ENCODE measurements at regions of chr3 and their contacts with region 1.

Region 1: GRCh38 chr3:47522082-47522987 is 8.8 kb upstream of the ELP6 start:
- DNase-seq: peak; percentile 85 to 86
- H3K4me3 ChIP-seq: no peak overlapping the region
- H3K4me3 Mint-ChIP-seq: no peak overlapping the region
- H3K27ac Mint-ChIP-seq: peak overlapping the region; percentile 40
- H3K4me1 ChIP-seq: peaks cover 11% of the 10 kb centered on the region
- H3K4me1 Mint-ChIP-seq: peaks cover 7% of the 10 kb centered on the region
- H3K27me3 ChIP-seq: no peaks in the 10 kb centered on the region
- H3K27me3 Mint-ChIP-seq: no peaks in the 10 kb centered on the region
- CTCF ChIP-seq: peak; percentile 84 to 89

Region 2: GRCh38 chr3:47261301-47261700 is 261.0 kb before region 1 on chr3:
- CTCF ChIA-PET with region 1: no interaction called
- POLR2A ChIA-PET with region 1: no interaction called
- intact Hi-C with region 1: no loop called
- DNase-seq: peak in 1 of 2 experiments; percentile 49
- H3K4me3 ChIP-seq: no peak overlapping the region
- H3K4me3 Mint-ChIP-seq: no peak overlapping the region
- H3K27ac Mint-ChIP-seq: no peak overlapping the region
- H3K4me1 ChIP-seq: peaks cover 17% of the 10 kb centered on the region
- H3K4me1 Mint-ChIP-seq: peaks cover 10% of the 10 kb centered on the region
- H3K27me3 ChIP-seq: no peaks in the 10 kb centered on the region
- H3K27me3 Mint-ChIP-seq: no peaks in the 10 kb centered on the region
- CTCF ChIP-seq: no peak

Region 3: GRCh38 chr3:47420511-47421484 is 101.5 kb before region 1 on chr3:
- CTCF ChIA-PET with region 1: interaction called, 10 read pairs
- POLR2A ChIA-PET with region 1: no interaction called
- intact Hi-C with region 1: no loop called
- DNase-seq: peak; percentile 84 to 91
- H3K4me3 ChIP-seq: no peak overlapping the region
- H3K4me3 Mint-ChIP-seq: no peak overlapping the region
- H3K27ac Mint-ChIP-seq: peak overlapping the region; percentile 45
- H3K4me1 ChIP-seq: peaks cover 8% of the 10 kb centered on the region
- H3K4me1 Mint-ChIP-seq: peaks cover 17% of the 10 kb centered on the region
- H3K27me3 ChIP-seq: no peaks in the 10 kb centered on the region
- H3K27me3 Mint-ChIP-seq: no peaks in the 10 kb centered on the region
- CTCF ChIP-seq: peak; percentile 87 to 96

Region 4: GRCh38 chr3:47565734-47566550 is 43.6 kb after region 1 on chr3:
- CTCF ChIA-PET with region 1: interaction called, 3 read pairs
- POLR2A ChIA-PET with region 1: no interaction called
- intact Hi-C with region 1: loop called (anchors 5 kb)
- DNase-seq: no peak
- H3K4me3 ChIP-seq: no peak overlapping the region
- H3K4me3 Mint-ChIP-seq: no peak overlapping the region
- H3K27ac Mint-ChIP-seq: no peak overlapping the region
- H3K4me1 ChIP-seq: no peaks in the 10 kb centered on the region
- H3K4me1 Mint-ChIP-seq: no peaks in the 10 kb centered on the region
- H3K27me3 ChIP-seq: no peaks in the 10 kb centered on the region
- H3K27me3 Mint-ChIP-seq: no peaks in the 10 kb centered on the region
- CTCF ChIP-seq: no peak

Region 5: DNA sequence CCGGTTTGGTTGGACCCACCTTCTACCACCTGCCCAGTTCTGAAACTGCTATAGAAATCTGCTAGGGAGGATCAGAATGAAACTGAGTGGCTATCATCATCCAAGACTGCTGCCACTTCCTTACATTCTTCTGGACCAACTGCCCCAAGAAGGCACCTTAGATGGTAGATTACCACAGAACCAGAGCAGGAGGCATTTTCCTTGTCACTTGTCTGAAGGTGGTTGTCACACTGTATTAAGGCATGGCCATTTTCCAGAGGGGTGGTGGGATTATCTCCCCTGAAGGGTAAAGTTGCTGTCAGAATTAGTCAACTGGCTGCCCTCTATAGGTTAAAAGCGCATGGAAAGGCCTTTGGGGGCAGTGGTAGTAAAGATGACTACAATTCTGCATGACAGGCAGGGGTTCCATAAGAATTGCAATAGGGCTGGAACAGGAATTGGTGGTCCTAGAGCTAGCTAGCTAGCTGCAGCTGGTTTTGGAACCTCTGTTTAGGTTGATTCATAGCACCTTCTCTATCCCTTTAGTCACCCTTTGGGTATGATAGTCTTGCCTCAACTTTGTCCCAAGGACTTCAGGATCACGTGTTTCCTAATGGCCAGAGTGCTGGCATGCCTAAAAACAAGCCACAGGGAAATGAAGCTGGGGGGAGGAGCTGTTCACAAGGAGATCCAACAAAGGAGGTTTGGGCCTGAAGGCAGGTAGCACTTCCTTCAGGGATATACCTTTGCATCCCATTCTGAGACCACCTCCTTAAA is 61.2 kb after region 1 on chr3:
- CTCF ChIA-PET with region 1: no interaction called
- POLR2A ChIA-PET with region 1: no interaction called
- intact Hi-C with region 1: loop called (anchors 5 kb)
- DNase-seq: no peak
- H3K4me3 ChIP-seq: no peak overlapping the region
- H3K4me3 Mint-ChIP-seq: no peak overlapping the region
- H3K27ac Mint-ChIP-seq: no peak overlapping the region
- H3K4me1 ChIP-seq: no peaks in the 10 kb centered on the region
- H3K4me1 Mint-ChIP-seq: no peaks in the 10 kb centered on the region
- H3K27me3 ChIP-seq: peaks cover 2% of the 10 kb centered on the region
- H3K27me3 Mint-ChIP-seq: peaks cover 5% of the 10 kb centered on the region
- CTCF ChIP-seq: no peak

Region 6: DNA sequence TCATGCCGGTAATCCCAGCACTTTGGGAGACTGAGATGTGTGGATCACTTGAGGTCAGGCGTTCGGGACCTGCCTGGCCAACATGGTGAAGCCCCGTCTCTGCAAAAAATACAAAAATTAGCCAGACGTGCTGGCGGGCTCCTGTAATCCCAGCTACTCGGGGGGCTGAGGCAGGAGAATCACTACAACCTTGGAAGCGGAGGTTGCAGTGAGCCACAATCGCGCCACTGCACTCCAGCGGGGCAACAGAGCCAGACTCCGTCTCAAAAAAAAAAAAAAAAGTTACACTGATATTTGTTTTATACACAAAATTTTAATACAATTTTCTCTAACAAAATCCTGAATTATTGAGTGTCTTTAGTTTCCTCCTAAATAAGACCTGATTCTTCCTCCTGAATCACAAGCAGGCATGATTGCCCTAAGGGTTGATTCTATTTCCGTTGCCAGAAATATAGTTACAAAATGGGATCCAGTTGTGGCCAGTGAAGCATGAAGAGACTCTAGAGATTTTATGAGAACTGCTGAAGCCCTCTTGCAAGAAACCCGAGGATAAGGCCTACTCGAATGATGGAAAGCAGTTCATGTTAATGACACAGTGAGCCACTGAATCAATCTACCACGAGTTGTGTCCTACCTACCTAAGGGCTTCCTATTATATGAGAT is 269.0 kb after region 1 on chr3:
- CTCF ChIA-PET with region 1: interaction called, 18 read pairs
- POLR2A ChIA-PET with region 1: interaction called, 8 read pairs
- intact Hi-C with region 1: no loop called
- DNase-seq: no peak
- H3K4me3 ChIP-seq: no peak overlapping the region
- H3K4me3 Mint-ChIP-seq: no peak overlapping the region
- H3K27ac Mint-ChIP-seq: no peak overlapping the region
- H3K4me1 ChIP-seq: no peaks in the 10 kb centered on the region
- H3K4me1 Mint-ChIP-seq: no peaks in the 10 kb centered on the region
- H3K27me3 ChIP-seq: no peaks in the 10 kb centered on the region
- H3K27me3 Mint-ChIP-seq: no peaks in the 10 kb centered on the region
- CTCF ChIP-seq: no peak

Region 7: DNA sequence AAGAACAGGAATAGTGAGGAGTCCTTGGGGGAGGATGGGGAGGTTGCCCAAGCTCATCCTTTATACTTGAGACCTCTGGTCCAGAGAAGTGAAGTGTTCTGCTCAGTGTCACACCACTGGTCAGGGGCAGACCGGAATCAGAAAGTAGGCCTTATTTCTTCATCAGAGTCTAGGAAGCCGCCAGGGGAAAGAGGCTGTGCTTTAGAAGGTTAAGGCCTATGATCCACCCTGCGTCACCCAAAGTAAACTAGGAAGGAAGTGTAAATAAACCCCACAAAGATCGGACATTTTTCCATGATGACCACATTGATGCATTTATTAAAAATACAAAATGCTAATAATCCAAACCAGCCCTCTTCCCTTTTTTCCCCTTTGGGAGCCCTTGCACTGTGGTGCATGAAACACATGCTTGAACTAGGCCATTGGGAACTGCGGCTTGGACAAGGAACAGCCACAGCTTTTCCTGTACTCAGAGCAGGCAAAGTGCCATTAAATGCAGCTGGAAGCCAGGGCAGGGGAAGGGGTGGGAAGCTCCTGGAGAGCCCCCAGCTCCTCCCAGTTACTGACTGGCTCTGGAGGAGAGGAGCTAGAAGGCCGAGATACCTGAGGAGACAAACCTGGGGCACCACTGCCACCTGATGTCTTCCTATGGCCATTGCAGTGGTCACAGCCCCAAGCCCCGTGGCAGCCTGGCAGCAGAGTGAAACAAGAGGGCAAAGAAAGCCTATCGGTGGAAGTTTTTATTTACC is 628.9 kb after region 1 on chr3:
- CTCF ChIA-PET with region 1: interaction called, 10 read pairs
- POLR2A ChIA-PET with region 1: no interaction called
- intact Hi-C with region 1: no loop called
- DNase-seq: peak; percentile 80 to 84
- H3K4me3 ChIP-seq: no peak overlapping the region
- H3K4me3 Mint-ChIP-seq: no peak overlapping the region
- H3K27ac Mint-ChIP-seq: no peak overlapping the region
- H3K4me1 ChIP-seq: no peaks in the 10 kb centered on the region
- H3K4me1 Mint-ChIP-seq: peaks cover 14% of the 10 kb centered on the region
- H3K27me3 ChIP-seq: no peaks in the 10 kb centered on the region
- H3K27me3 Mint-ChIP-seq: no peaks in the 10 kb centered on the region
- CTCF ChIP-seq: peak; percentile 81 to 87